ENCODE measurements at regions of chr3 and their contacts with region 1.

Region 1: DNA sequence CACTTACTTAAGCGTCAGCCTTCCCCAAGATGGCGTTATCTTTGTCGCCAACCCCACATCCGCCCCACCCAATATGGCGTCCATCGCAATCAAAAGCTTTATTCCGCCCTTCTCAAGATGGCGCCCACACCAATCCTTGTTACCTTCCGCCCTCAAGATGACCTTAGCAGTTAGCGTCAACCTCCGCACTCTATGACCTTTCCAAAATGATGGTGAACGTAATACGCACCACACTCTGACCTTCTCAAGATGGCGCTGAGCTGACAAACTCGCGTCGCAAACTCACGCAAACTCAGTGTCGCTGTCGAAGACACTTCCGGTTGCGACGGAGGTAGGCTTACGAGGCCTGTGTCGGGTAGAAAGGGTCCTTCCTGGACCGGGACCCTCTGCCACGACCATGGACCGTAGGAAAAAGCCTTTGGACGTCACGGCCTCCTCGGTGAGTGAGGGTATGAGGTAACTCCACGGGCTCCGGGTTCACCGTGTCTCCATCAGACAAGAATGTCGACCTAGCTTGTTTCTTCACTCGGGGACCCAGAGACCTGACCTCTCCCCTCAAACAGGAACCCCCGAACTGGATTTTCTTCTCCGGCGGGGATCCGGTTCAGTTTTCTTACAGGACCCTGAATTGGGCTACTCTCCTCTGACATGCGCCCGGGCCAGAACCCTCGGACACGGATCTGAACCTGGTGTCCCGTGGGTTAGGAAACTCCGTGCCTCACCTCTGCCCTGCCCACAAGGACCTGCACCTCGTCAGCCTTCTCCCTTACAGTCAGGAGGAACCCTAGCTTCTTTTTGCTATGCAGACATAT is at the start of gene CCDC174:
- DNase-seq: peak; percentile 99
- ATAC-seq: peak; percentile 100
- H3K4me3 ChIP-seq: peak within 1 kb of the TSS; percentile 62
- H3K27ac ChIP-seq: peak within 1 kb of the TSS; percentile 85
- H3K4me1 ChIP-seq: no peaks in the 10 kb centered on the region
- H3K27me3 ChIP-seq: no peaks in the 10 kb centered on the region
- CTCF ChIP-seq: 0 out of 2 replicates have a peak, but pooled peaks have one; percentile 5
- POLR2A ChIP-seq: peak; percentile 91
- RAD21 ChIP-seq: no peak
- total RNA-seq, gene CCDC174: 5.9 and 6.9 TPM in 2 replicates

Region 2: GRCh38 chr3:14508961-14509795 is 142.5 kb before region 1 on chr3:
- CTCF ChIA-PET with region 1: interaction called, 3 read pairs
- POLR2A ChIA-PET with region 1: interaction called, 6 read pairs
- dilution Hi-C with region 1: no loop called
- in situ Hi-C with region 1: no loop called
- intact Hi-C with region 1: loop called (anchors 2 kb)
- DNase-seq: peak; percentile 18
- ATAC-seq: peak; percentile 93
- H3K4me3 ChIP-seq: no peak overlapping the region
- H3K27ac ChIP-seq: no peak overlapping the region
- H3K4me1 ChIP-seq: no peaks in the 10 kb centered on the region
- H3K27me3 ChIP-seq: peaks cover 17% of the 10 kb centered on the region
- CTCF ChIP-seq: peak; percentile 71
- POLR2A ChIP-seq: no peak
- RAD21 ChIP-seq: peak; percentile 68

Region 3: DNA sequence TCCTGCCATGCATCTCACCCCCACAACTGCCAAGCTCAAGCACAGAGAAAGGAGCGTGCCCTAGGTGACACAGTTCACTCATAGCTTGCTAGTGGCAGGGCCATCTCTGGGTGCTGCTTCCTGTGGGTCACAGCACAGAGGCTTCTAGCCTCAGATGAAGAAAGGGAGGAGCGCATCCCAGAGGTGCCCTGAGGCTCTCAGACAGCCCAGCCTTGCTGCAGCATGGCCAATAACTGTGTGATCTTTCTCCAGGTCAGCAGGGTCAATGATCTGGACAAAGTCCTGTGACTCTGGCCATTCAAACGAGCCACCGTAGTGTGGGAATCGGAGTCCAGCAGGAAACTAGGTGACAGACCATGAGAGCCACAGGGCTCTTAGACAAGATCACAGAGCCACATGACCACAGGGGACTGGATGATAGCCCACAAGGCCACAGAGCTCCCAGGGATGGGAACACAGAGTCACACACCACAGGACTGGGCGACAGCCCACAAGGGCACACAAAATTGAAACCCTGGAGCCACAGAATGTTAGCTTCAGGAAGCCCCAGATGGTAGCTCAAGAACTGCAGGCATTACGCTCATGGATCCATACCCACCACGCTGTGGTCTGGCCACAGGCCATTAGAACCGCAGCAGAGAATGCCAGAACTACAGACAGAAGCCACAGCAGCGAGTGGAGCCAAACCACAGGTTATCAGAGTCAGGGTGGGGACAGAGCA is 85.6 kb before region 1 on chr3:
- CTCF ChIA-PET with region 1: no interaction called
- POLR2A ChIA-PET with region 1: no interaction called
- dilution Hi-C with region 1: no loop called
- in situ Hi-C with region 1: no loop called
- intact Hi-C with region 1: loop called (anchors 1 kb)
- DNase-seq: peak; percentile 26
- ATAC-seq: no peak
- H3K4me3 ChIP-seq: no peak overlapping the region
- H3K27ac ChIP-seq: no peak overlapping the region
- H3K4me1 ChIP-seq: no peaks in the 10 kb centered on the region
- H3K27me3 ChIP-seq: peaks cover 49% of the 10 kb centered on the region
- CTCF ChIP-seq: no peak
- POLR2A ChIP-seq: no peak
- RAD21 ChIP-seq: no peak

Region 4: DNA sequence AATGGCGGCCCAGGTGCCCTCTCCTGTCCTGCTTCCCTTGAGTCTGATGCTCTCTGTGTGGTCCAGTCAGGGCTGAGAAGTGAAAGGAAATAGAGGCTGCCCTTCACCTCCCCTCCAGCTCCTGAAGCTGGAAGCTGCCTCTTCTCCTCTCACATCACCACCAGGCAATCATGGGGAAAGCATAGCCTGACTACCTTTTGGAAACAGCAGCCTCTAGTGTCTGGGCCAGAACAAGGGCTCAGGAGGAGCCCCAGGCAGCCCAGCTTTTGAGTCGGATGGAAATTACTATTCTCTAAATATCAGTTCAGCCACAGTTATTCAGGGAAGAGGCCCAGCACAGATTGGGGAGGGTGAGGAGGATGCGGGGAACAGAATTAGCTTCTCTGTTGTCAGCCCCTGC is 43.3 kb before region 1 on chr3:
- CTCF ChIA-PET with region 1: no interaction called
- POLR2A ChIA-PET with region 1: no interaction called
- dilution Hi-C with region 1: no loop called
- in situ Hi-C with region 1: no loop called
- intact Hi-C with region 1: no loop called
- DNase-seq: no peak
- ATAC-seq: no peak
- H3K4me3 ChIP-seq: no peak overlapping the region
- H3K27ac ChIP-seq: no peak overlapping the region
- H3K4me1 ChIP-seq: no peaks in the 10 kb centered on the region
- H3K27me3 ChIP-seq: peaks cover 30% of the 10 kb centered on the region
- CTCF ChIP-seq: no peak
- POLR2A ChIP-seq: no peak
- RAD21 ChIP-seq: no peak

Region 5: DNA sequence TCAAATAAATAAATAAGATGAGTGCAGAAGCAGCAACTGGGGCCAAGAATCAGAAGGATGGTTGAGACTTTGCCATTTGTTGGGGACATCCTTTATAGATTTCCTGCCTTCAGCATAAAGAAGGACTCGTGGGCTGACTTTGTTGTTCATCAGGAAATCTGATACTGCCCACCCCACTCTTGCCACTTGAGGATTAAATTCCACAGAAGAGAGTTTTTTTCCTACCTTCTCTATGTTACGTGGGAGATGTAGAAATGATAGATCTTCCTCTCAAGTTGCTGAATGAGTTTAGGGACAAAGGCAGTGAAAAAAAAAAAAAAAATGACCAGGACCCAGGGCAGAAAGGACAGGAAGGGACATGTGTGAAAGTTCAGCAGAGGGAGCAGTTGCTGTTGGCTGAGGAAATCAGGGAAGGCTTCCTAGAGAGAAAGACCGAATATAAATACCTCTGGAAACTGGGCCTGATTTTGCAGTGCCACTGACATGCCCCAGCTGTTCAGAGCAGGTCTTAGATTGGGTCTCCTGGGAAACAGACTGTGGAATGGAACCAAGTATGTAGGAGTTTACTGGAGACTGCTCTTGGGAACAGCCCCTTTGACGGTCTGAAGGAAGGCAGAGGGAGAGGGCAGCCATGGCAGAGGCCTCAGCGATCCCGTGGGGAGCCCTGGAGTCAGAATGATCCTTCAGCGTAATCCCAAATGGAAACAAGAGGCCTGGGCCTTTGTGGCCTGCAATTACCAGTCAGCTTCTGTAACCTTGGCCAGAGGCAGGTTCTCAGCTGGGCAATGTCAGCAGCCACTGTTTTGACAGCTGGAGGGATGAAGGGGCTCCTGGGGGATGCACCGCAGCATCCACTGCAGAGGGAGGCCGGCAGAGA is 74.2 kb after region 1 on chr3:
- CTCF ChIA-PET with region 1: no interaction called
- POLR2A ChIA-PET with region 1: no interaction called
- dilution Hi-C with region 1: no loop called
- in situ Hi-C with region 1: no loop called
- intact Hi-C with region 1: loop called (anchors 2 kb)
- DNase-seq: peak; percentile 68
- ATAC-seq: peak; percentile 86
- H3K4me3 ChIP-seq: no peak overlapping the region
- H3K27ac ChIP-seq: peak overlapping the region; percentile 85; the same call in 1 of the 2 replicates
- H3K4me1 ChIP-seq: peaks cover 13% of the 10 kb centered on the region; the same call in 1 of the 2 replicates
- H3K27me3 ChIP-seq: peaks cover 2% of the 10 kb centered on the region; the same call in 1 of the 2 replicates
- CTCF ChIP-seq: no peak
- POLR2A ChIP-seq: no peak
- RAD21 ChIP-seq: no peak

Region 6: GRCh38 chr3:15042936-15043335 is 391.3 kb after region 1 on chr3:
- CTCF ChIA-PET with region 1: no interaction called
- POLR2A ChIA-PET with region 1: no interaction called
- dilution Hi-C with region 1: no loop called
- in situ Hi-C with region 1: loop called (anchors 25 kb)
- intact Hi-C with region 1: no loop called
- DNase-seq: peak; percentile 28
- ATAC-seq: no peak
- H3K4me3 ChIP-seq: no peak overlapping the region
- H3K27ac ChIP-seq: no peak overlapping the region
- H3K4me1 ChIP-seq: peaks cover 4% of the 10 kb centered on the region
- H3K27me3 ChIP-seq: no peaks in the 10 kb centered on the region
- CTCF ChIP-seq: no peak
- POLR2A ChIP-seq: no peak
- RAD21 ChIP-seq: no peak

Measured in IMR-90 (cell line).